ENCODE measurements at regions of chr6 and their contacts with region 1.

Region 1: GRCh38 chr6:32838114-32838958 is at the start of gene TAP2:
- DNase-seq: peak; percentile 90 to 97 (median 96)
- H3K4me3 ChIP-seq: peak within 1 kb of the TSS; percentile 52 to 94 (median 81)
- H3K27ac ChIP-seq: peak within 1 kb of the TSS; percentile 73 to 99 (median 96)
- H3K27me3 ChIP-seq: no peaks in the 10 kb centered on the region
- CTCF ChIP-seq: peak; percentile 85 to 100 (median 97)
- total RNA-seq, gene TAP2: 12.3 to 50.8 (median 24.2) TPM

Region 2: DNA sequence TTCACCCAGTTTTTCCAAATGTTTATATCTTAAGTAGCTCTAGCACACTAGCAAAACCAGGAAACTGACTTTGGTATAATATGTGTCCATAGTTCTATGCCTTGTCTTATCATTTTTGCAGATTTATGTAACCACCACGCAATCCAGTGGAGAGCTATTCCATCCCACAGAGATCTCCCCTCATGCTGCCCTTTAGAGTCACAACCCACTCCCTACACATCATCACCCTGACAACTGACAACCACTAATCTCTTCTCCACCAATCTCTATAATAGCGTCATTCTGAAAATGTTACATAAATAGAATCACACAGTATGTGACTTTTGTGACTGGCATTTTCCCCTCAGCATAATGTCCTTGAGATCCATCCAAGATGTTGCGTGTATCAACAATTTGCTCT is 337.3 kb before region 1 on chr6:
- intact Hi-C with region 1: no loop called
- DNase-seq: no peak
- H3K4me3 ChIP-seq: no peak overlapping the region
- H3K27ac ChIP-seq: no peak overlapping the region
- H3K27me3 ChIP-seq: no peaks in the 10 kb centered on the region
- CTCF ChIP-seq: no peak

Region 3: DNA sequence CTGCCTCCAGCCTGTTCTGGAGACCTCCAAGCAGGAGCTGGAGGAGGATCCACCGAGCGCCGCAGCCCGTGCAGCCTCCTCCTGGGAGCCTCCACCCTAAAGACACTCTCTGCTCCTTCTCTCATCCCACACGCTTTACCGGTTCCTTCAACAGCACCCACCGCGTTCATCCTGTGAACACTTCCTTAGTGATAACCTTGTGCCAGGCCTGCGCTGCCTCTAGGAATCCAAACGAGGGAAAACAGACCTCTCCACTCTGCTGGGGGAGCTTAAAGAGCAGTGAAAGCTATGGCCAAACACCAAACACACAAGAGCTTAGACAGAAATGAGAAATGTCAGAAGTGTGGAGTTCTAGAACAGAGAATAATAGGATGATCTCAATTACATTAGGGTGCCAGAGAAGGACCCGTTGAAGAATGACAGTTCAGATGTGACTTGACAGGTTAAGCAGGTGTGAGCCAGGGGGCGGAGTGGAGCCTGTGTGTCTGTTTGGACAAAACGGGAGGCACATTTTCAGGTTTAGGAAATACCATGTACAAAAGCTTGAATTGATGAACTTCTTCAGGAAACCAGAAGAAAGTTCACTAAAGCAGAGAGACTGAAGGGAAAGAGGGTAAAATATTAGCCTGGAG is 279.8 kb before region 1 on chr6:
- intact Hi-C with region 1: no loop called
- DNase-seq: no peak
- H3K4me3 ChIP-seq: no peak overlapping the region
- H3K27ac ChIP-seq: no peak overlapping the region
- H3K27me3 ChIP-seq: no peaks in the 10 kb centered on the region
- CTCF ChIP-seq: no peak

Region 4: DNA sequence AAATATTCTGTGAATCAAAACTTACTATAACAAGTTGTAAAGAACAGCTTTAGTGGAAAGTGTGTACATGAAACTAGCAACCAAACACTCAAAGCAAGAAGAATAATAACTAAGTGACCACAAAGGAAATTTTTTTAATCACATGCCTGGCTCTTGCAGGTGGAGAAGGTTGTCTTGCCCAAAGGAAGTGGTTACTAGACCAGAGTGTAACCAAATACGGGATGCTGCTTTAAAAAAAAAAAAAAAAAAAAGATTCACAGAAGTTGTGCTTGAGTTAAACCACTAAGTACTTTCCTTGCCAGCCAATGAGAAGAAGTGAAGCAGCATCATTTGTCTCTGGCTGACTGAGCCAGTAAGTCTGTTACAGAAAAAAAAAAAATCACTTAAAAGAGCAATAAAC is 152.7 kb before region 1 on chr6:
- intact Hi-C with region 1: no loop called
- DNase-seq: no peak
- H3K4me3 ChIP-seq: no peak overlapping the region
- H3K27ac ChIP-seq: no peak overlapping the region
- H3K27me3 ChIP-seq: peaks cover 0 to 73% (median 4%) of the 10 kb centered on the region in 45 donors
- CTCF ChIP-seq: no peak

Region 5: GRCh38 chr6:32853541-32854375 is 15.4 kb after region 1 on chr6 and contains the starts of genes PSMB9 and TAP1:
- intact Hi-C with region 1: loop called (anchors 1 to 2 kb)
- DNase-seq: peak; percentile 80 to 94 (median 92)
- H3K4me3 ChIP-seq: peak within 1 kb of the TSS; percentile 67 to 99 (median 92)
- H3K27ac ChIP-seq: peak within 1 kb of the TSS; percentile 87 to 100 (median 99)
- H3K27me3 ChIP-seq: no peaks in the 10 kb centered on the region
- CTCF ChIP-seq: peak in 55 of 56 donors; percentile 60 to 96 (median 80)
- total RNA-seq, gene PSMB9: 3.1 to 32.7 (median 12.7) TPM
- total RNA-seq, gene TAP1: 10.8 to 44.1 (median 18.6) TPM

Region 6: DNA sequence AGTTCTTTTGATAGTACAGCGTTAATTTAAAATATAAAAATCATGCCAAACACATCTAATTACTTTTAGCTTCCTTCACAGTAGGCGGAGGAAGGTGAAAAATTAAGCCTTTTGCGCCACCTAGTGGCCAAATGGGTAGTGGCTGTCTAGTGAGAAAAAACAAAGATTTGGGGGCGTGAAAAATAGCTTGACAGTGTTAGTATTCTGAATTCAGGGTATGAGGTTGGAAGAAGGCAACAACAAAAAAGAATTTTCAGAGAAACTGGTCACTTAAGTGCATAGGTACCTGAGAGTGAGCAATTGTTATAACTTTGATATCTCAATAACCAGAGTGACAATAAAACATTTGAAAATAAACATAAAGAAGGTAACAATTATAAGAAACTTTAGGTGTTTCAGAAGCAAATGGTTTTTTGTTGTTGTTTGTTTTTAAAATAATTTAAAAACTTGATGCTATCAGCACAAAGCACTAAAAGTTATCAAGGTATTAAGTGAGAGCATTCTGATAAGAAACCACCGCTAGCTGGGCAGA is 30.0 kb after region 1 on chr6:
- intact Hi-C with region 1: loop called (anchors 2 to 5 kb)
- DNase-seq: peak; percentile 55 to 84 (median 75)
- H3K4me3 ChIP-seq: peak overlapping the region in 5 of 59 donors; percentile 1 to 26 (median 5)
- H3K27ac ChIP-seq: no peak overlapping the region
- H3K27me3 ChIP-seq: peaks cover 0 to 3% (median 0%) of the 10 kb centered on the region in 45 donors
- CTCF ChIP-seq: peak; percentile 91 to 100 (median 98)